ENCODE measurements at regions of chr3 and their contacts with region 1.

Region 1: GRCh38 chr3:14203521-14204079 is 25.0 kb downstream of the LSM3 start:
- DNase-seq: no peak
- ATAC-seq: peak; percentile 93
- H3K4me3 ChIP-seq: no peak overlapping the region
- H3K27ac ChIP-seq: no peak overlapping the region
- H3K4me1 ChIP-seq: no peaks in the 10 kb centered on the region
- H3K27me3 ChIP-seq: no peaks in the 10 kb centered on the region
- CTCF ChIP-seq: peak; percentile 75 to 89 (median 84)
- EP300 ChIP-seq: no peak
- POLR2A ChIP-seq: no peak
- RAD21 ChIP-seq: peak; percentile 79

Region 2: DNA sequence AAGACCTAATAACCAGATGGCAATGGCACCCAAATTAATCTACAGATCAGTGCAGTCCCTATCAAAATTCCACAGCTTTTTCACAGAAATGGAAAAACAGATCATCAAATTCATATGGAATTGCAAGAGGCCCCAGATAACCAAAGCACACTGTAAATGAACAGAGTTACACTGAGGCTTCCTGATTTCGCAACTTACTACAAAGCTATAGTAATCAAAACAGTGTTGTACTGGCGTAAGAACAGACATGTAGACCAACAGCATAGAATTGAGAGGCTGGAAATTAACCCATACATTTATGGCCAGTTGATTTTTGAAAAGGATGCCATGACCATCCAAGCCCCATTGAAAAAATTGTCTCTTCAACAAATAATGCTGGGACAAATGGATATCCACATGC is 41.4 kb before region 1 on chr3:
- CTCF ChIA-PET with region 1: no interaction called
- POLR2A ChIA-PET with region 1: no interaction called
- RAD21 ChIA-PET with region 1: no interaction called
- SMC1A ChIA-PET with region 1: no interaction called
- in situ Hi-C with region 1: no loop called
- intact Hi-C with region 1: no loop called
- DNase-seq: no peak
- ATAC-seq: no peak
- H3K4me3 ChIP-seq: no peak overlapping the region
- H3K27ac ChIP-seq: no peak overlapping the region
- H3K4me1 ChIP-seq: no peaks in the 10 kb centered on the region
- H3K27me3 ChIP-seq: no peaks in the 10 kb centered on the region
- CTCF ChIP-seq: no peak
- EP300 ChIP-seq: no peak
- POLR2A ChIP-seq: no peak
- RAD21 ChIP-seq: no peak

Region 3: DNA sequence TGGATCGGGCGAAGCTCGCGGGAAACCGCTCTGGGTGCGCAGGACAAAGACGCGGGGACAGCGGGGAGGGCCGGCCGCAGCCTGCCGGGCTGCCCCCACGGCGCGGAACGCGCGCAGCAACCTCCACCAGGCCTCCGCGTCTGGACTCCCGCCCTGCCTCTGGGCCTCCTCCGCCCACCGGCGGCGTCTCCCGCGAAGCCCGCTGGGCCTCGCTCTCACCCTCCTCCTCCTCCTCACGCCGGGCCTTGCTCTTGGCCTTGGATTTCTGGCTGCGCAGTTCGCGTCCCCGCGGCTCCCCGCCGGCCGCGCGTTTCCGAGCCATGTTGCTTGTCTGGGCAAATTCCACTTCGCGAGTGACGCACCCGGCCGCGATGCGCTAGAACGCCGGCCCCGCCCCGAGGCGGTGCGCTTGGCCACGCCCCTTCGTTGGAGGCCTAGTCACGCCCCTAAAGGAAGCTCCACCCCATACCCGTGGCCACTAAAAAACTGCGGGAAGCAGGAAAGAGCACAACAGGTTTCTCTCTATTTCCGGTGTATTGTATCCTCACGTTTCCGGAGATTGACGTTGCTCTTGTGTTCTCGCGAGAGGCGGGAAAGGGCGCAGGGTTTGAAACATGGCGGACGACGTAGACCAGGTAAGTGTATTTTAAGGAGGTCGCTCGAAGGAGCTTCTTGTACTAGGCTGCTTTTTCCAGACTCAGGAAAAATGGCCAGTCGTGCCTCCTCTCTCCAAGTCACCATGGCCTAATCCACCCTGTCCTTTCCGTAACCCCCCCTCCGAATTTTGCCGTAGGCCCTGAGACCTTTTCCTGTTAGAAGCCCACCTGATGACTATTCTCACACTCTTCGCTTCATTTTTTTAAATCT is 25.1 kb before region 1 on chr3 and contains the starts of genes LSM3 and XPC:
- CTCF ChIA-PET with region 1: interaction called, 28 read pairs
- POLR2A ChIA-PET with region 1: no interaction called
- RAD21 ChIA-PET with region 1: interaction called, 4 read pairs
- SMC1A ChIA-PET with region 1: interaction called, 9 read pairs
- in situ Hi-C with region 1: no loop called
- intact Hi-C with region 1: no loop called
- DNase-seq: peak; percentile 97
- ATAC-seq: peak; percentile 92
- H3K4me3 ChIP-seq: peak within 1 kb of the TSS; percentile 93
- H3K27ac ChIP-seq: peak within 1 kb of the TSS; percentile 84
- H3K4me1 ChIP-seq: peaks cover 14% of the 10 kb centered on the region
- H3K27me3 ChIP-seq: no peaks in the 10 kb centered on the region
- CTCF ChIP-seq: no peak
- EP300 ChIP-seq: no peak
- POLR2A ChIP-seq: peak; percentile 98
- RAD21 ChIP-seq: no peak
- polyA plus RNA-seq, gene LSM3: 98.1 to 111 TPM
- polyA plus RNA-seq, gene XPC: 4.0 to 6.1 TPM

Region 4: GRCh38 chr3:14216257-14217048 is 12.9 kb after region 1 on chr3:
- CTCF ChIA-PET with region 1: interaction called, 32 read pairs
- POLR2A ChIA-PET with region 1: no interaction called
- RAD21 ChIA-PET with region 1: interaction called, 5 read pairs
- SMC1A ChIA-PET with region 1: interaction called, 12 read pairs
- in situ Hi-C with region 1: no loop called
- intact Hi-C with region 1: no loop called
- DNase-seq: no peak
- ATAC-seq: peak; percentile 41; the same call in 1 of the 3 replicates
- H3K4me3 ChIP-seq: peak overlapping the region; percentile 26; the same call in 1 of the 2 replicates
- H3K27ac ChIP-seq: no peak overlapping the region
- H3K4me1 ChIP-seq: no peaks in the 10 kb centered on the region
- H3K27me3 ChIP-seq: no peaks in the 10 kb centered on the region
- CTCF ChIP-seq: peak; percentile 9 to 47 (median 27); a peak in 5 of 6 replicates
- EP300 ChIP-seq: no peak
- POLR2A ChIP-seq: no peak
- RAD21 ChIP-seq: peak; percentile 25; the same call in 1 of the 2 replicates

Region 5: GRCh38 chr3:14261229-14261628 is 57.6 kb after region 1 on chr3:
- CTCF ChIA-PET with region 1: interaction called, 10 read pairs
- POLR2A ChIA-PET with region 1: no interaction called
- RAD21 ChIA-PET with region 1: interaction called, 11 read pairs
- SMC1A ChIA-PET with region 1: interaction called, 5 read pairs
- in situ Hi-C with region 1: no loop called
- intact Hi-C with region 1: loop called (anchors 2 kb)
- DNase-seq: peak; percentile 16
- ATAC-seq: peak; percentile 94
- H3K4me3 ChIP-seq: no peak overlapping the region
- H3K27ac ChIP-seq: no peak overlapping the region
- H3K4me1 ChIP-seq: no peaks in the 10 kb centered on the region
- H3K27me3 ChIP-seq: peaks cover 0 to 4% of the 10 kb centered on the region in 2 experiments; a peak in 2 of 4 replicates
- CTCF ChIP-seq: peak; percentile 89 to 95 (median 94); a peak in 5 of 6 replicates
- EP300 ChIP-seq: no peak
- POLR2A ChIP-seq: no peak
- RAD21 ChIP-seq: peak; percentile 98

Region 6: DNA sequence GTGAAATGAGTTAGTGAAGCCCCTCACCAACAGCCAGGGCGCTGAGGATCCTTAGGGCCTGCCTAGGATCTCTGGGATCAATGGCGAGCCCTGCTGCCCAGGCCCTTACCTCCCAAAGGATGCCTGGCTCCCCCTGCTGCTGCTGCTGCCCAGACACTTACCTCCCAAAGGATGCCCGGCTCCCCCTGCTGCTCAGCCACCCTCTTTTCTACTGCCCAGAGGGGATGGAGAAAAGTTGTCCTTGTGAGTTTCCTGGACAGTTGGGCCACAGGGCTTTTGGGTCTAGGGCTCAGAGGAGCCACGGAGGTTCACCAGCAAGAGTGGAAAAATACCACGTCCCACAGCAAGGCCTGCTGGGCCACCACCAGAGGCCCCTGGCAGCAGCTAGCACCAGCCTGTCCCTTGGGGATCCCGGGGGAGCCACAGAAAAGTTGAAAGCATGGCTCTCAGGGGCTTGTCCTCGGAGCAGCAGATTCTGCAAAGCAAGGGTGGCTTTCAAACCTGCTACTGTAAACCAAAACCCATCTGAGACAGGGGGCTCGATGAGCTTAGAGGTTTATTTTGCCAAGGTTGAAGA is 258.2 kb after region 1 on chr3:
- CTCF ChIA-PET with region 1: interaction called, 46 read pairs
- POLR2A ChIA-PET with region 1: no interaction called
- RAD21 ChIA-PET with region 1: interaction called, 26 read pairs
- SMC1A ChIA-PET with region 1: interaction called, 26 read pairs
- in situ Hi-C with region 1: no loop called
- intact Hi-C with region 1: no loop called
- DNase-seq: no peak
- ATAC-seq: peak; percentile 85
- H3K4me3 ChIP-seq: no peak overlapping the region
- H3K27ac ChIP-seq: no peak overlapping the region
- H3K4me1 ChIP-seq: no peaks in the 10 kb centered on the region
- H3K27me3 ChIP-seq: no peaks in the 10 kb centered on the region
- CTCF ChIP-seq: peak; percentile 65 to 96 (median 70); a peak in 5 of 6 replicates
- EP300 ChIP-seq: no peak
- POLR2A ChIP-seq: no peak
- RAD21 ChIP-seq: peak; percentile 87

Region 7: GRCh38 chr3:14478946-14479550 is 275.4 kb after region 1 on chr3:
- CTCF ChIA-PET with region 1: interaction called, 4 read pairs
- POLR2A ChIA-PET with region 1: no interaction called
- RAD21 ChIA-PET with region 1: no interaction called
- SMC1A ChIA-PET with region 1: interaction called, 4 read pairs
- in situ Hi-C with region 1: loop called (anchors 5 kb)
- intact Hi-C with region 1: no loop called
- DNase-seq: no peak
- ATAC-seq: no peak
- H3K4me3 ChIP-seq: no peak overlapping the region
- H3K27ac ChIP-seq: no peak overlapping the region
- H3K4me1 ChIP-seq: no peaks in the 10 kb centered on the region
- H3K27me3 ChIP-seq: no peaks in the 10 kb centered on the region
- CTCF ChIP-seq: no peak
- EP300 ChIP-seq: no peak
- POLR2A ChIP-seq: no peak
- RAD21 ChIP-seq: no peak